ENCODE measurements at regions of chr5 and their contacts with region 1.

Region 1: DNA sequence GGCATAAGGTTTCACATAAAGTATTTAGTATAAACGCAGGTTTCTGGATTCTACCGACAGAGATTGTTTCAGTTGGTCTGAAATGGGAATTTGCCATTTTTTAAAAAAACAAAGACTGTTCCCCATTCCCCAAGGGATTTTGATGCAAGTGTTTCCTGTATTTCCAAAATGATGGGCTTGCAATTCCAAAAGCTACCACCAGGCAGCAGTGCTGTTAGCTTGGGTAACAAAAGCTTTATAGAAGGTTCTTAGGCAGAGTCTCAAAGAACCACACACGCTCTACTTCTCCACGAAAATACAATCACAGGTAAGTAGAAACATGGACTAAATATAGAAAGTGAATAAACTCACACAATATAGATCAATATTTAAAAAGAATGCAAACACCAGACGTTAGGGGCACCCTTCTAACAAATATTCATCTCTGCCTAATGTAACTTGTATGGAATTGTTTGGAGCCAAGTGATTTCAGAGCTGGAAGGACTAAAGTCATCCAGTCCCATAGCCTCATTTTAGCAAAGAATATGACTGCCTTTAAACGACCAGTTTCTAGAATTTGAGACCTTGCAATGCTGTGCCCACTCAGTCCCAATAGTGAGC is 154.3 kb downstream of the SPOCK1 start:
- DNase-seq: peak in 1 of 2 experiments; percentile 34
- H3K4me3 ChIP-seq: no peak overlapping the region
- H3K4me3 Mint-ChIP-seq: no peak overlapping the region
- H3K27ac Mint-ChIP-seq: no peak overlapping the region
- H3K4me1 ChIP-seq: no peaks in the 10 kb centered on the region
- H3K4me1 Mint-ChIP-seq: no peaks in the 10 kb centered on the region
- H3K27me3 ChIP-seq: peaks cover 1% of the 10 kb centered on the region
- H3K27me3 Mint-ChIP-seq: peaks cover 10% of the 10 kb centered on the region
- CTCF ChIP-seq: peak; percentile 62 to 74

Region 2: GRCh38 chr5:137415231-137415681 is 70.4 kb after region 1 on chr5:
- CTCF ChIA-PET with region 1: no interaction called
- POLR2A ChIA-PET with region 1: no interaction called
- intact Hi-C with region 1: no loop called
- DNase-seq: no peak
- H3K4me3 ChIP-seq: no peak overlapping the region
- H3K4me3 Mint-ChIP-seq: no peak overlapping the region
- H3K27ac Mint-ChIP-seq: no peak overlapping the region
- H3K4me1 ChIP-seq: no peaks in the 10 kb centered on the region
- H3K4me1 Mint-ChIP-seq: no peaks in the 10 kb centered on the region
- H3K27me3 ChIP-seq: no peaks in the 10 kb centered on the region
- H3K27me3 Mint-ChIP-seq: no peaks in the 10 kb centered on the region
- CTCF ChIP-seq: no peak

Region 3: GRCh38 chr5:137498736-137499505 is 154.1 kb after region 1 on chr5 and contains the start of gene SPOCK1:
- CTCF ChIA-PET with region 1: no interaction called
- POLR2A ChIA-PET with region 1: no interaction called
- intact Hi-C with region 1: loop called (anchors 5 kb)
- DNase-seq: peak in 1 of 2 experiments; percentile 71
- H3K4me3 ChIP-seq: no peak within 1 kb of the TSS
- H3K4me3 Mint-ChIP-seq: no peak within 1 kb of the TSS
- H3K27ac Mint-ChIP-seq: no peak within 1 kb of the TSS
- H3K4me1 ChIP-seq: no peaks in the 10 kb centered on the region
- H3K4me1 Mint-ChIP-seq: no peaks in the 10 kb centered on the region
- H3K27me3 ChIP-seq: no peaks in the 10 kb centered on the region; the same call in 1 of the 2 replicates
- H3K27me3 Mint-ChIP-seq: peaks cover 8% of the 10 kb centered on the region
- CTCF ChIP-seq: peak; percentile 34 to 59
- total RNA-seq, gene SPOCK1: not detected in 2 replicates